K562 (cell line): ENCODE measurements at regions of chr5 and their contacts with region 1.

Region 1: DNA sequence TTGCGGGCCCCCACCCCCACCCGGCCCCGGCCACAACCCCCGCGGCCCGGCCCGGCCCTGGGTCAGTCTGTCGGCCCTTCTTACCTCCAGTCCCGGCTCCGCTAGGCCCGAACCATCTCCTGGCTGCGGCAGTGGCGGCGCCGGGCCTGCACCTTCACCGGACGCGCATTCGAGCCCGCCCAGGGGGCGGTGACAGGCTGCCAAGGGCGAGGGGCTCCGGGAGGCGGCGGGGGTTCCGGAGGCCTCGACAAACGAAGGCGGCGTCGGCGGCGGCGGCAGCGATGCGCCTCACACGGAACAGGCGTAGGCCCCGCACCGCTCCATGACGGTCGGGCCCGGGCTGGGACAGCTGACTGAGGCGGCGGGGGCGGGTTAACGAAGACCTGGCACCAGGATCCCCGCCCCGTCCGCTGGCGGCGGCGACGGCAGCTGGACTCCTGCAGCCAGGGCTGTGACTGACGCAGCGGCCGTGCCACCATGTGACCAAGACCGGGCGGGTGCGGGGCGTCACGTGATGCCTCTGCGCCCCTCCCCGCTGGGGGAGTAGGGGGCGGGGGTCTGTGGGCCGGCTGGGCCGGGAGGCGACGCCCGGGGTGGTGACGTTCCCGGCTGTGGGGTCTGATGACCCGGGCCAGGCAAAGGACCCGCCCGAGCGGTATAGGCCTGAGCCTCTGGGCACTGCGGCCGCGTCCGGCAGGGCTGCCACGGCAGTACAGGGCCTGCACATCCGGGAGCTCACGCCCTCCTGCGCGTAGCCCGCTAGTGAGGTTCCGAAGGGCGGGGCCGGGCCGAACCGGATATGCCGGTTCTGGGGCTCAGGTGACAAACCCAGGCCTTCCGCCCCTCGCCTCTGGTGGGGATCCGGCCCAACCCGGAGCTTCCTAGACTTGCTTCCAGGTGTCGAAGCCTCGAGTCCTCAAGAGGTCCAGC is at the start of gene AFF4:
- DNase-seq: peak; percentile 94 to 97 (median 96)
- ATAC-seq: peak; percentile 96
- H3K4me3 ChIP-seq: peak within 1 kb of the TSS; percentile 95
- H3K27ac ChIP-seq: peak within 1 kb of the TSS; percentile 92
- H3K4me1 ChIP-seq: peaks cover 8 to 19% of the 10 kb centered on the region in 2 experiments; a peak in 4 of 5 replicates
- H3K27me3 ChIP-seq: no peaks in the 10 kb centered on the region
- CTCF ChIP-seq: no peak
- EP300 ChIP-seq: peak; percentile 28; the same call in 1 of the 2 replicates
- POLR2A ChIP-seq: peak; percentile 85
- RAD21 ChIP-seq: no peak; a peak in 1 of 4 replicates
- polyA plus RNA-seq, gene AFF4: 1.7 to 3.6 TPM

Region 2: GRCh38 chr5:132947671-132948070 is 15.8 kb before region 1 on chr5:
- CTCF ChIA-PET with region 1: interaction called, 3 read pairs
- POLR2A ChIA-PET with region 1: interaction called, 18 read pairs
- in situ Hi-C with region 1: no loop called
- intact Hi-C with region 1: no loop called
- DNase-seq: no peak
- ATAC-seq: no peak
- H3K4me3 ChIP-seq: no peak overlapping the region
- H3K27ac ChIP-seq: no peak overlapping the region
- H3K4me1 ChIP-seq: peaks cover 0 to 5% of the 10 kb centered on the region in 2 experiments; a peak in 3 of 5 replicates
- H3K27me3 ChIP-seq: no peaks in the 10 kb centered on the region
- CTCF ChIP-seq: no peak
- EP300 ChIP-seq: no peak
- POLR2A ChIP-seq: no peak
- RAD21 ChIP-seq: no peak

Region 3: GRCh38 chr5:132976852-132977251 is 13.4 kb after region 1 on chr5:
- CTCF ChIA-PET with region 1: no interaction called
- POLR2A ChIA-PET with region 1: interaction called, 23 read pairs
- in situ Hi-C with region 1: no loop called
- intact Hi-C with region 1: no loop called
- DNase-seq: no peak
- ATAC-seq: no peak
- H3K4me3 ChIP-seq: no peak overlapping the region
- H3K27ac ChIP-seq: no peak overlapping the region
- H3K4me1 ChIP-seq: peaks cover 5 to 8% of the 10 kb centered on the region in 2 experiments; a peak in 3 of 5 replicates
- H3K27me3 ChIP-seq: no peaks in the 10 kb centered on the region
- CTCF ChIP-seq: no peak
- EP300 ChIP-seq: no peak
- POLR2A ChIP-seq: no peak
- RAD21 ChIP-seq: no peak

Region 4: GRCh38 chr5:133062276-133062675 is 98.8 kb after region 1 on chr5:
- CTCF ChIA-PET with region 1: no interaction called
- POLR2A ChIA-PET with region 1: no interaction called
- in situ Hi-C with region 1: no loop called
- intact Hi-C with region 1: no loop called
- DNase-seq: no peak
- ATAC-seq: no peak
- H3K4me3 ChIP-seq: no peak overlapping the region
- H3K27ac ChIP-seq: no peak overlapping the region
- H3K4me1 ChIP-seq: no peaks in the 10 kb centered on the region
- H3K27me3 ChIP-seq: no peaks in the 10 kb centered on the region
- CTCF ChIP-seq: no peak
- EP300 ChIP-seq: no peak
- POLR2A ChIP-seq: no peak
- RAD21 ChIP-seq: no peak